ENCODE measurements at regions of chr12 and their contacts with region 1.

Region 1: GRCh38 chr12:2057041-2057794 is 4.4 kb downstream of the CACNA1C start:
- ATAC-seq: peak in 2 of 8 experiments; percentile 11 to 13
- H3K4me3 ChIP-seq: no peak overlapping the region
- H3K27ac ChIP-seq: no peak overlapping the region
- H3K4me1 ChIP-seq: peaks cover 3 to 5% of the 10 kb centered on the region in 2 donors

Region 2: DNA sequence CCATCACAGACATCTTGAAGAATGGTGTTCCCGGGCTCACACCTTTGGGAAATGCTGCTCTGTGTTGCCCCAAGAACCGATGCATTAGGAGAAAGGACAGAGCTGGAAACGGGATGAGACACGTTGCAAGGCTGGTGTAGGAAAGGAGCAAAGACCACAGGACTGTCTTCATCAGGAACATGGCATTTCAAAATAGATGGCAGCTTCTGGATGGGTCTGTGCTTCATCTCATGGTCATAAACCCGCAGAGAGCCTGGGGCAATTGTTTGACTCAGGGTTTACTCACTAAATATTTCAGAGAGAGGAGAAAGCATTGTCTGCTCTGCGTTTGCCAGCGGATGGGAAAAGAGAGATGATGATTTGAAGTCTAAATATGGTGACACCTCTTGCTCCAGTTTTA is 71.9 kb after region 1 on chr12:
- in situ Hi-C with region 1: no loop called
- ATAC-seq: no peak
- H3K4me3 ChIP-seq: no peak overlapping the region
- H3K27ac ChIP-seq: no peak overlapping the region
- H3K4me1 ChIP-seq: no peaks in the 10 kb centered on the region

Region 3: DNA sequence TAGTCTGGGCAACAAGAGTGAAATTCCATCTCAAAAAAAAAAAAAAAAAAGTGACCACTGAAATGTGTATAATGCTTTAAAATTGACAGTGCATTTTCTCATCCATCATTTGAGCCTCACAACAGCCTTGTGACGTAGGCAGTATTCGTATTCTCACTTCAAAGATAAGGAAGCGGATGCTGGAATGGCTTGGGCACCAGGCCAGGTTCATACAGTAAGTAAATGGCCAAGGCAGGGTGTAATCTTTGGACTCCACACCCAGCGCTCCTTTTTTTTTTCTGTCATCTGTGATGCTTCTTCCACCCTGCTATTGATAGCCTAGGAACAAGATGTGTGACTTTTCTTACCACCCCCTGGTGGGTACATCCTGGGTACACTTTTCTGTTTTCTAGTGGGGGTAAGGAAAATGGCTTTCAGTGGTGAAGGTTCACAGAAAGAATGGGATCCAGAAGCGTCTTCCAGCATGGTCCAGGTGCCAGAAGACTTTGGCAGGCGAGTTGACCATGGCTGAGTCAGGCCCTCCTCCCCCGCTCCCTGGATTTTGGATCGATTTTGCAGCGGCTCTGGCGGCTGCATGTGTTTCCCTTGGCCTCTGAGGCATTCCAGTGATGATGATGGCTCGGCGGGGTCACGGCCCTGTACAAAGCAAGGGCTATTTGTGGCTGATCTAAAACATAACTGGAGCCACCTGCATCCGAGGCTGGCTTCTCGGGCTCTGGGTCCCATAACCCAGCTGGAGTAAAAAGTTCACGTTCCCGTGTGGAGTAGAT is 106.1 kb after region 1 on chr12:
- in situ Hi-C with region 1: no loop called
- ATAC-seq: peak in 2 of 8 experiments; percentile 90 to 95
- H3K4me3 ChIP-seq: no peak overlapping the region
- H3K27ac ChIP-seq: no peak overlapping the region
- H3K4me1 ChIP-seq: peaks cover 0 to 3% of the 10 kb centered on the region in 2 donors

Region 4: GRCh38 chr12:2267703-2268501 is 210.7 kb after region 1 on chr12:
- in situ Hi-C with region 1: loop called in 1 of 9 experiments (anchors 25 kb)
- ATAC-seq: peak in 1 of 8 experiments; percentile 5
- H3K4me3 ChIP-seq: no peak overlapping the region
- H3K27ac ChIP-seq: no peak overlapping the region
- H3K4me1 ChIP-seq: peaks cover 0 to 31% of the 10 kb centered on the region in 2 donors

Region 5: DNA sequence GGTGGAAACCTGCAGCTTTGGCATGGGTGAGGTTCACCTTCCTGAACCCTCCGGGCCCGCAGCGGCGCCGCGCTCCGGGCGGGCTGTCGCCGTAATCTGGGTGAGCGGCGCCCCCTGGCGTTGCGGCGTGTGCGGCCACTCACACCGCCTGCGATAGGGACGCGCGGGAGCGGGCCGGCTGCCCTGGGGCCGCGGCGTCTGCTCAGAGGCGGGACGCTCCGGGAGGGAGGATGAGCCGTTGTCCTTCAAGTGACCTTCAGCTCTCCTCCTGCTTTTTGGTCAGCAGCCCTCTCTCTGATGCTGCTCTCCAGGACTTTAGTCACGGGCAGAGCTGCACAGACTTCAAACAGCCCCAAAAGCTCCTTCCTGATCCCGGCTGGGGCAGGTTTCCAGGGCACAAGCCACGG is 525.9 kb after region 1 on chr12:
- in situ Hi-C with region 1: loop called in 2 of 9 experiments (anchors 25 kb)
- ATAC-seq: peak; percentile 86 to 99 (median 96)
- H3K4me3 ChIP-seq: no peak overlapping the region
- H3K27ac ChIP-seq: no peak overlapping the region
- H3K4me1 ChIP-seq: no peaks in the 10 kb centered on the region

Measured in motor neuron (in vitro differentiated cells).